Aorta (tissue), 5 donors: ENCODE measurements at regions of chr12 and their contacts with region 1.

Region 1: DNA sequence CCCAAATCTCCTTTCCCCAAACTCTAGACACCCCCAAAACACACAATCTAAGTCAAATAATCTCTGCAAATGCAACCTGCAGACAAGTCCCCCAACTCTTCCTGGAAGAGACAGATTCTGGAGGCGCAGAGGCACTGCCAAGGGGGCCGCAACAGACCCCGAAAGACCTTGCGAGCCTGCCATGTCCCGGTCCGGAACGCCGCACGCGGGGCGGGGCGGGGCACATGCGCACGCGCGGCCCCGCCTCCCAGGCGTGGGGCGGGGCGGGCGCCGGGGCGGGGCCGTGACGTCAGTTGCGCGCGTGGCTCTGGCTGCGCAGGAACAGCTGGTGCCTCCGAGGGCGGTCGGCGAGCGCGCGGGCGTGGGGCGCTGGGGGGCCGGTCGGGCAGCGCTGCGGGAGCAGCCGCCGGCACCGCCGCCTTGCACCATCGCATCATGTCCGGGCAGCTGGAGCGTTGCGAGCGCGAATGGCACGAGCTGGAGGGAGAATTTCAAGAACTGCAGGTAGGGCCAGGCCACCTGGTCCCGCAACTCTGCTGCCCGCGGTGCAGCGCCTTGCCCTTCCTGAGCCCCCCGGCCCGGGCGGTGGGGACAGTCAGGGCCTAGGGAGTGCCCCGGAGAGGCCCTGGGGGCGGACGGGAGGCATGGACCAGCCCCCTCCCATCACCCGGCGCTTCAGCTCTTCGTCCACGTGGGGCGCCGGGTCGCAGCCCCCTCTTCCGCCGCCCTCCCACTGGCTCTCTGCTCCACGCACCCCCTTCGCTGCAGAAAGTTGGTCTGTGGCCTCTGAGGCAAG is at the start of gene TMEM120B:
- DNase-seq: peak; percentile 89 to 95
- ATAC-seq: peak; percentile 96
- H3K4me3 ChIP-seq: peak within 1 kb of the TSS; percentile 78 to 80
- H3K27ac ChIP-seq: peak within 1 kb of the TSS in 1 of 2 donors; percentile 91
- H3K4me1 ChIP-seq: no peaks in the 10 kb centered on the region
- H3K27me3 ChIP-seq: no peaks in the 10 kb centered on the region
- total RNA-seq, gene TMEM120B: 8.6 to 12.0 TPM

Region 2: DNA sequence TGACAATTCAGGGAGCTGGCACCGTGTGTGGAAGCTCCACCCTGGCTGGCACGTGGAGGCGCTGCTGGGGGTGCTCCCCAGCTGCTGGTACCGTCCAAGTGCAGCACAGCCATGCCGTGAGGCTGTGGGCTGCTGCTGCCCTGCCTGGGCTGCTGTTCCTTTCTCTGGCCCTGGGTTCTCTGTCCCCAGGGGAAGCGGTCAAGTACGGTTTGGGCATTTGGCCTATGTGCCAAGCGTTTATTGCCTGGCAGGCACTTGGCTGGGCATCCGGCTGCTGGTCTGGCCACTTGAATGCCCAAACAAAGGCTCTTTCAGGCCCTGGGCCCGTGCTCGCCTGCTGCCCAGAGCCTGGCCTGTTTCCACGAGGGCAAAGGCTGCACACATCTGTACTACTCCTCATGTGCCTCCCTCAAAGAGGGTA is 41.2 kb after region 1 on chr12:
- intact Hi-C with region 1: loop called in 1 of 2 experiments (anchors 5 kb)
- DNase-seq: peak; percentile 81 to 88
- ATAC-seq: peak; percentile 75
- H3K4me3 ChIP-seq: no peak overlapping the region
- H3K27ac ChIP-seq: peak overlapping the region in 1 of 2 donors; percentile 41
- H3K4me1 ChIP-seq: no peaks in the 10 kb centered on the region
- H3K27me3 ChIP-seq: no peaks in the 10 kb centered on the region

Region 3: GRCh38 chr12:121765573-121765972 is 52.9 kb after region 1 on chr12:
- intact Hi-C with region 1: loop called (anchors 5 kb)
- DNase-seq: no peak
- ATAC-seq: no peak
- H3K4me3 ChIP-seq: no peak overlapping the region
- H3K27ac ChIP-seq: no peak overlapping the region
- H3K4me1 ChIP-seq: peaks cover 0 to 2% of the 10 kb centered on the region in 2 donors
- H3K27me3 ChIP-seq: no peaks in the 10 kb centered on the region

Region 4: GRCh38 chr12:121894633-121895032 is 182.0 kb after region 1 on chr12:
- intact Hi-C with region 1: loop called in 1 of 2 experiments (anchors 10 kb)
- DNase-seq: no peak
- ATAC-seq: no peak
- H3K4me3 ChIP-seq: no peak overlapping the region
- H3K27ac ChIP-seq: no peak overlapping the region
- H3K4me1 ChIP-seq: peaks cover 0 to 7% of the 10 kb centered on the region in 2 donors
- H3K27me3 ChIP-seq: no peaks in the 10 kb centered on the region